WTC11 (cell line): ENCODE measurements at regions of chr4 and their contacts with region 1.

Region 1: GRCh38 chr4:106369456-106370060 is 980 bp upstream of the GIMD1 start:
- DNase-seq: peak; percentile 31
- ATAC-seq: peak; percentile 82
- H3K4me3 Mint-ChIP-seq: no peak overlapping the region
- H3K27ac Mint-ChIP-seq: no peak overlapping the region
- H3K4me1 Mint-ChIP-seq: peaks cover 5% of the 10 kb centered on the region
- H3K27me3 Mint-ChIP-seq: no peaks in the 10 kb centered on the region
- CTCF ChIP-seq: peak; percentile 29; the same call in 1 of the 2 replicates

Region 2: GRCh38 chr4:106266201-106266600 is 103.4 kb before region 1 on chr4:
- CTCF ChIA-PET with region 1: interaction called, 10 read pairs
- POLR2A ChIA-PET with region 1: no interaction called
- DNase-seq: no peak
- ATAC-seq: no peak
- H3K4me3 Mint-ChIP-seq: no peak overlapping the region
- H3K27ac Mint-ChIP-seq: no peak overlapping the region
- H3K4me1 Mint-ChIP-seq: peaks cover 2% of the 10 kb centered on the region; the same call in 1 of the 2 replicates
- H3K27me3 Mint-ChIP-seq: no peaks in the 10 kb centered on the region
- CTCF ChIP-seq: no peak

Region 3: GRCh38 chr4:106486533-106486932 is 117.0 kb after region 1 on chr4:
- CTCF ChIA-PET with region 1: no interaction called
- POLR2A ChIA-PET with region 1: no interaction called
- DNase-seq: no peak
- ATAC-seq: peak; percentile 80
- H3K4me3 Mint-ChIP-seq: no peak overlapping the region
- H3K27ac Mint-ChIP-seq: peak overlapping the region; percentile 30
- H3K4me1 Mint-ChIP-seq: peaks cover 24% of the 10 kb centered on the region
- H3K27me3 Mint-ChIP-seq: no peaks in the 10 kb centered on the region
- CTCF ChIP-seq: no peak

Region 4: GRCh38 chr4:106502106-106502699 is 132.6 kb after region 1 on chr4:
- CTCF ChIA-PET with region 1: interaction called, 20 read pairs
- POLR2A ChIA-PET with region 1: no interaction called
- DNase-seq: peak; percentile 76
- ATAC-seq: peak; percentile 94
- H3K4me3 Mint-ChIP-seq: no peak overlapping the region
- H3K27ac Mint-ChIP-seq: no peak overlapping the region
- H3K4me1 Mint-ChIP-seq: peaks cover 24% of the 10 kb centered on the region
- H3K27me3 Mint-ChIP-seq: no peaks in the 10 kb centered on the region
- CTCF ChIP-seq: peak; percentile 78

Region 5: DNA sequence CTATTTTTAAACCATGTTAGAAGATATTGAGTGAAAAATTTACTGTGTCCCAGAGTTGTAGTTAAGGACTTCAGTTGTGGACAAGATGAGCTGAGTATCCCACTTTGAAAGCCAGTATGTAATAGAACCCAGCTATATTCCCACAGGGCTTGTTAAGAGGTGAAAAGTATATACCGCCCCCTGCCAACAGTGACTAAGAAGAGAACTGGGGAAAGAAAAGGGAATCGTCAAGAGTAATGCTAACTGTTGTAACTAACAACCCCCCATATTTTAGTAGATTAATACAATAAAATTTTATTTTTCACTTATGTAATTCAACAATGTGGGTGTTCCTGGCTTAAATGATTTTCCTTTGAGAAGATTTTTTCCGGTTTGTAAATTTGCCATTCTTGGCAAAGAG is 249.4 kb after region 1 on chr4:
- CTCF ChIA-PET with region 1: interaction called, 10 read pairs
- POLR2A ChIA-PET with region 1: no interaction called
- DNase-seq: no peak
- ATAC-seq: peak; percentile 91
- H3K4me3 Mint-ChIP-seq: no peak overlapping the region
- H3K27ac Mint-ChIP-seq: no peak overlapping the region
- H3K4me1 Mint-ChIP-seq: peaks cover 4% of the 10 kb centered on the region; the same call in 1 of the 2 replicates
- H3K27me3 Mint-ChIP-seq: no peaks in the 10 kb centered on the region
- CTCF ChIP-seq: no peak